HepG2 (cell line): ENCODE measurements at regions of chr13 and their contacts with region 1.

Region 1: DNA sequence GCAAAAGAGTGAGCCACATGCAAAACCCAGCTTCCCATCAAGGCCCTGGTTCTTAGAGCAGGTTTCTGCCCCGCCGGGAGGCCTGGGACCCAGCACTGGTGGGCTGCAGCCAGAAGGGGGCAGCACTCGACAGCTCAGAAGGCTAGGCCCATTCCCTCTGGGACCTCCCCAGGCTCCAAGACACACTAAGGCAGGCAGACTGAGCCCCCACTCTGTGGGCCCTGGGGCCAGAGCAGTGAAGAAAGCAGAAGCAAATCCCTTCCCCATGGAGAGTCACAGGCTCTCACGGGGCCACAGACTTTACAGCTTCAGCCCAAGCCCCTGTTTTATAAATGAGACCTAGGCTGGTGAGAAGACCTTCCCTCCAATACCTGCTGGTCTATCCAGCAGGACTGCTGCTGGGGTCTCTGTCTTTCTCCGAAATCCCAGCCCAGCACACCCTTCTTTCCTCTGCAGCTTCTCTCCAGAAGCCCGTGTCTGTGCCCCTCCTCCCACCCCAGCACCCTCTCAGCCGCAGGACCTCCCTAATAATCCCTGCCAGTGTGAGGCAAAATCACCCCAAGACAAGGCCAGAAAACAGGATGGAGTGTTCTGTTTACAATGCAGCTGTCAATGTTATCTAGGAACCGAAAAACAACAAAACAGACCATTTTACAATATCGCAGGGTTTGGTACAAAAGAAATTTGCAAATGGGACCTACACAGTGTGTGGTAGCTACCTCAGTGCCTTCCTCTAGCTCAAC is 109.3 kb downstream of the ABCC4 start:
- DNase-seq: peak; percentile 41
- ATAC-seq: peak; percentile 99
- H3K4me3 ChIP-seq: no peak overlapping the region
- H3K27ac ChIP-seq: no peak overlapping the region
- H3K4me1 ChIP-seq: 0 out of 2 replicates have a peak, but pooled peaks cover 10% of the 10 kb centered on the region
- H3K27me3 ChIP-seq: no peaks in the 10 kb centered on the region
- CTCF ChIP-seq: peak; percentile 96
- EP300 ChIP-seq: no peak
- POLR2A ChIP-seq: no peak
- RAD21 ChIP-seq: peak; percentile 92

Region 2: DNA sequence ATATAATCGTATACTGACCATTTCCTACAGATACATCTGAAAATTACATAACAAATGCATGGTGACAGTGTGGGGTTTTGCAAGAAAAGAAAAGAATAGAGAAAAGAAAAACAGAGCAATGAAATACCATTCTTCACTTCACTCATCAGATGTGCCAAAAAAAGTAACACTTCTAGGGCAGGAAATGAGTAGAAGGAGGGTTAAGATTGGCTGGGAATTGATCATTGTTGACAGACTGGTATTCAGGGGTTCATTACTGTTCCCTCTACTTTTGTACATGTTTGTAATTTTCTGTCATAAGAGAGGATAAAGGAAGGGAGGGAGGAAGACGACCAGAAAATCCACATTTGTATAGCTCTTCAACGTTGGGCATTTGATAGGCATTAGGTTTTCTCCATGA is 77.8 kb after region 1 on chr13:
- CTCF ChIA-PET with region 1: no interaction called
- POLR2A ChIA-PET with region 1: no interaction called
- in situ Hi-C with region 1: no loop called
- intact Hi-C with region 1: loop called (anchors 2 kb)
- DNase-seq: no peak
- ATAC-seq: no peak
- H3K4me3 ChIP-seq: no peak overlapping the region
- H3K27ac ChIP-seq: no peak overlapping the region
- H3K4me1 ChIP-seq: peaks cover 41% of the 10 kb centered on the region
- H3K27me3 ChIP-seq: no peaks in the 10 kb centered on the region
- CTCF ChIP-seq: no peak
- EP300 ChIP-seq: no peak
- POLR2A ChIP-seq: no peak
- RAD21 ChIP-seq: no peak

Region 3: GRCh38 chr13:95296326-95296925 is 104.4 kb after region 1 on chr13:
- CTCF ChIA-PET with region 1: interaction called, 3 read pairs
- POLR2A ChIA-PET with region 1: no interaction called
- in situ Hi-C with region 1: loop called (anchors 10 kb)
- intact Hi-C with region 1: loop called (anchors 2 kb)
- DNase-seq: peak; percentile 56
- ATAC-seq: peak; percentile 60
- H3K4me3 ChIP-seq: no peak overlapping the region
- H3K27ac ChIP-seq: no peak overlapping the region
- H3K4me1 ChIP-seq: peaks cover 38% of the 10 kb centered on the region
- H3K27me3 ChIP-seq: peaks cover 0 to 3% of the 10 kb centered on the region in 2 experiments; a peak in 1 of 5 replicates
- CTCF ChIP-seq: peak; percentile 84
- EP300 ChIP-seq: no peak
- POLR2A ChIP-seq: no peak
- RAD21 ChIP-seq: peak; percentile 72; the same call in 1 of the 2 replicates

Region 4: GRCh38 chr13:95378603-95379002 is 186.6 kb after region 1 on chr13:
- CTCF ChIA-PET with region 1: interaction called, 27 read pairs
- POLR2A ChIA-PET with region 1: interaction called, 4 read pairs
- in situ Hi-C with region 1: no loop called
- intact Hi-C with region 1: loop called (anchors 1 kb)
- DNase-seq: no peak
- ATAC-seq: no peak
- H3K4me3 ChIP-seq: no peak overlapping the region
- H3K27ac ChIP-seq: no peak overlapping the region
- H3K4me1 ChIP-seq: peaks cover 10% of the 10 kb centered on the region; the same call in 1 of the 2 replicates
- H3K27me3 ChIP-seq: no peaks in the 10 kb centered on the region
- CTCF ChIP-seq: no peak
- EP300 ChIP-seq: no peak
- POLR2A ChIP-seq: no peak
- RAD21 ChIP-seq: no peak

Region 5: DNA sequence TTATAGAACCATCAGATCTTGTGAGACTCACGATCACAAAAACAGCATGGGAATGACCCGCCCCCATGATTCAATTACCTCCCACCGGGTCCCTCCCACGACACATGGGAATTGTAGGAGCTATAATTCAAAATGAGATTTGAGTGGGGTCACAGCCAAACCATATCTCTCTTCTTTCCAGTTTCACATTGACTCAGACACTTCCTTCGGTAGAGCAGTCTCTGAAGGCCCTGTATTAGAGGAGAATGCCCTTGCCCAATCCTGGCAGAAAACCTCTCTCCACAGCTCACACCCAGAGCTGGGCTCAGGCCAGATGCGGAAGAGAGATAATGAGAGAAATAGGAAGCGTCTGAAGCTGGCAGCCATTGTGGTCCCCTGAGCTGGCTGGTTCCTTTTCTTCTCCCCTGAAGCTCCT is 288.1 kb after region 1 on chr13:
- CTCF ChIA-PET with region 1: interaction called, 7 read pairs
- POLR2A ChIA-PET with region 1: no interaction called
- in situ Hi-C with region 1: loop called (anchors 5 kb)
- intact Hi-C with region 1: loop called (anchors 1 kb)
- DNase-seq: no peak
- ATAC-seq: no peak
- H3K4me3 ChIP-seq: no peak overlapping the region
- H3K27ac ChIP-seq: no peak overlapping the region
- H3K4me1 ChIP-seq: no peaks in the 10 kb centered on the region
- H3K27me3 ChIP-seq: peaks cover 2 to 11% of the 10 kb centered on the region in 2 experiments
- CTCF ChIP-seq: no peak
- EP300 ChIP-seq: no peak
- POLR2A ChIP-seq: no peak
- RAD21 ChIP-seq: no peak

Region 6: DNA sequence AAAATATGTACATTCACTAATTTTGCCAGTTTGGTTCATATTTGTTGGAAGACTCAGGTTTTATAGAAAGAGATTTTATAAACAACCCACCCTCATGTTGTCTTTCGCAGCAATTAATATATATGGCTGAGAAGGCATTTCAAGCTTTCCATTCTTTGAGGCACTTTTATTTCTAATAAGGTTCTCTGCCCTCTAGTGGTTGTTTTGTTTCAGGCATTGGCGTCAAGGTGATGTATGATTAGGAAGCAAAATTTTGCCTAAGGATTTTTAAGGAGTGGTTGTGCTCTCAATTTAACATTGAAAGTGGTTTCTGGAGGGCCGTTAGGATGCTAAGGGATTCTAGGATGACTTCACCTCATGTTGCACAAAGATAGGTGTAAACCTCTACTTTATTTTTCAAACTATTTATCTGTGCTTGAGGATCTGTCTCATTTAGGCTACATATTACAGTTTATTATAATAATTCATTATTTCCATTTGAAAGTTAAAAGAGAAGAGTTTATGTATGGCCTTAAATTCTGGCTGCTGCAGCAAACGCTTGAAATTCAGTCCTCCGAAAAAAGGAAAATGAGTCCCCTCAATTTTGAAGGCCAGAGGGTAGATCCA is 1766.4 kb after region 1 on chr13:
- CTCF ChIA-PET with region 1: no interaction called
- POLR2A ChIA-PET with region 1: no interaction called
- in situ Hi-C with region 1: loop called (anchors 25 kb)
- intact Hi-C with region 1: no loop called
- DNase-seq: peak; percentile 20
- ATAC-seq: peak; percentile 36; the same call in 1 of the 3 replicates
- H3K4me3 ChIP-seq: no peak overlapping the region
- H3K27ac ChIP-seq: no peak overlapping the region
- H3K4me1 ChIP-seq: no peaks in the 10 kb centered on the region
- H3K27me3 ChIP-seq: no peaks in the 10 kb centered on the region
- CTCF ChIP-seq: peak; percentile 56
- EP300 ChIP-seq: no peak
- POLR2A ChIP-seq: no peak
- RAD21 ChIP-seq: no peak